Posterior cingulate gyrus (tissue), 11 donors: ENCODE measurements at regions of chr15 and their contacts with region 1.

Region 1: DNA sequence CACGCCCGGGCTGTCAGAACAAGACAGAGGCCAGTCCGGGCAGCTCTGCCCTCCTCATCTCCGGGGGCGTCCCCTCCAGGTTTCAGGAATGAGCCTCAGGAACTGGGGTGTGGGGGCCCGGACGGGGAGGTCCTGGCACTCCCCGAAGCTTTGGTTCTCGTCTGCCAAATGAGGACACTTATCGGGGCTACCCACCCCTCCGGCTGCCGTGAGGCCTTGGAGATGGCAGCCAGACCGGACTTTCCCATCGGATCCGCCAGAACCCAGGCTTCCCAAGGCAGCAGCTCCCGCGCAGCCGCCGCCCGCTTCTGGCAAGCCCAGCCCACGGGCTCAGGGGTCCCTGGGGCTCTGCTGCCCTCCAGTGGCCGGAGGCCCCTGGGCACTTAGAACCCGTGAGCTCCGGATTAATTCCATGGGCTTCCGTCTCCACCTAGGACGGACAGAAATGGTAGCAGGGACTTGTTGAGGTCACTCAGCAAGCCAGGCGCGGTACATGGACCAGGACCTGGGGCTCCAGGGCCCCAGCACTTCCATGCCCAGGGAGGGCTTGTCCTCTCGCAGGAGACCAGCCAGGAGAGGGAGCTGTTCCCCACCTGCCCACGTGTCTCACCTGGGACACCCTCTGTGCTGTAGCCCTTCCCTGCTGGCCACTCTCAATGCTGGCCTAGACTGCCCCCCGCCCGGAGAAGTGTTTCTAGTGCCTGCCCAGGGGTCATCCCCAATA is 89.4 kb downstream of the LINGO1 start:
- DNase-seq: peak; percentile 75 to 98 (median 85)

Region 2: GRCh38 chr15:77118882-77119321 is 424.4 kb before region 1 on chr15:
- intact Hi-C with region 1: loop called (anchors 1 kb)
- DNase-seq: peak in 4 of 10 donors; percentile 25 to 48 (median 30)

Region 3: DNA sequence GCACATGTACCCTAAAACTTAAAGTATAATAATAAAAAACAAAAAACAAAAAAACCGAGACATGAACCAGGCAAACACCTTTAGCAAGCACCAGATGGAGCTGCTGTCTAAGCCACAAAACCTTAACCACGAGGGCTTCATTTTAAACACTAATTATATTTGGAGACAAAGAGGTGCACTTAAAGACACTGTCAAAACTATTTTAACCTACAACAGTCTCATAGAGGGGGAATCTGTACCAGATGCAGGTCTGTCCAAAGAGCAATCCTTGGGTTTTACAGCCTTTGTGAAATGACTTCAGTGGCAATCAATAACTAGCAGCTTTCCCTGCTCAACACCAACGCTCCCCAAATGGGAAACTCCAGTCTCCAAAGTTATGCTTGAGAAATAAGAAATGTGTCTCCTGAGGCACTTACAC is 356.7 kb before region 1 on chr15:
- intact Hi-C with region 1: loop called (anchors 1 kb)
- DNase-seq: no peak

Region 4: DNA sequence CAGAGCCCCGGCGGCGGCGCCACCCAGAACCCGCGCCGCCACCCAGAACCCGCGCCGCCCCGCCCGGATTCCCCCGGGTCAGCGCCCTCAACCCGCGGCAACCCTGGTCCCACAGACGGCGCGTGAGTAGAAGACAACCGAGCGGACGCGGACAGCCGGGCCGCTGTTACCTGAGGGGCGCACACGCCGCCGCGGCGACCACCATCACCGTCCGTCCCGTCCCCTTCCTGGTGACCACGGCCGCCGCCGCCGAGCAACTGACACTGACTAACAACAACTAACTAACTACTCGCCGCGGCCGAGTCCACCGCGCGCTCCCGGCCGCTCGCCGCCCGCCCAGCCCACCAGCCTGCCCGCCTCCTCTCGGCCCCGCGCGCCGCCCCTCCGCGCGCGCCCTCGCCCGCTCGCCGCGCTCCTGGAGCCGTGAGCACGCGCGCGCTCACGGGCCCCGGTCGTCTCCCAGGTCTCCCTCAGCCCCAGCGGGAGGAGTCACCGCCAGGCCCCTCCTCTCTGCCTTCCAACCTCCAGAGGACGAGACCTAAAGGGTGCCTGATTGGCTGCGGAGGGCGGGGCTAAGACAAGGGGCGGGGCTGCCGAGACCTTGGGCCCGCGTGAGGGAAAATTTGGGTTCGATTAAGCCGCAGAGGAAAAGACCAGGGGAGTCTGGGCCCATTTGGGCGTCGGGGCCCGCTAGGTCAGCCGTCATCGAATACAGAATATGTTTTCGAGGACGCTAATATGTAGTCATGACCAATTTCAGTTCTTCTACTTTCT is 123.3 kb before region 1 on chr15 and contains the start of gene PEAK1:
- intact Hi-C with region 1: loop called (anchors 5 kb)
- DNase-seq: peak; percentile 97 to 100 (median 98)

Region 5: GRCh38 chr15:77430213-77430612 is 113.1 kb before region 1 on chr15:
- intact Hi-C with region 1: no loop called
- DNase-seq: no peak

Region 6: DNA sequence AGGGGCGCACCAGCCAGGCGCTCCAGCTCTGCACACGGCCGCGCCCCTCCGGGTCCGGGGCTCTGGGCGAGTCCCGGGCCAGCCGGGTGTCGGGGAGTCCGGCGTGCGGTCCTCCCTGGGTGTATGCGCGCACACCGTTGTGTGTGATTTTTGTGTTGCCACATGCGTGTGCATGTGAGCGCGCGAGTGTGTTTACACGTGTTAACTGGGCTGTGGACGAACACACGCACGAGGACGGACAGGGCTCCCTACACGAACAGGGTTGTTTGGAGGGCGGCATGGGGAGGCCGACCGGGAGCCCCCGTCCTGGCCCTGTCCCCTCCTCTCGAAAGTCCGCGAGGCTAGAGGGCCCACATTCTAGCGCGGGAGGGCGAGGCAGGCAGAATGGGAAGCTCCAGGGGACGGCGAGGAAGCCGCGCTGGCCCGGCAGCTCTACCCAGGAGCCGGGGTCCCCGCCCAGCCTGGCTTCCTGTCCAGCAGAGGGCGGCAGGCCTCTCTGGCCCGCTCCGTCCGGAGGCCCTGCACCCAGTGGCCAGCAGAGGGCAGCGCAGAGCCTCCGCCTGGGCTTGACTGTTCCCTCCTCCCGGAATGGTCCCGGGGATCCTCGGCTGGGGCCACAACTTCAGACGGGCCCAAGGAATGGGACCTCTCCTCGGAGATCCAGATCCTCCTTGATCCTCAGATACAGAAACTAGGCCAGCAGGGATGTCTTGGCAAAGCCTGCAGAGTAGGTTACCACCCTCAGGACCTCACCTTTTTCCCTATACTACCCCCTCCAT is 90.0 kb after region 1 on chr15:
- intact Hi-C with region 1: loop called (anchors 2 kb)
- DNase-seq: peak; percentile 84 to 99 (median 92)

Region 7: GRCh38 chr15:78065284-78065872 is 522.1 kb after region 1 on chr15:
- intact Hi-C with region 1: no loop called
- DNase-seq: peak in 3 of 10 donors; percentile 22 to 52 (median 28)